Activated CD8-positive, alpha-beta memory T cell treated with anti-CD3 and anti-CD28 coated beads, Interleukin-2, amount 10 ng/mL, durations not matched to agents 7 days and 5 days (primary cell): ENCODE measurements at regions of chr11 and their contacts with region 1.

Region 1: GRCh38 chr11:12137007-12137690 is 26.8 kb downstream of the MICAL2 start:
- DNase-seq: no peak
- ATAC-seq: no peak
- H3K4me3 Mint-ChIP-seq: no peak overlapping the region
- H3K27ac Mint-ChIP-seq: no peak overlapping the region
- H3K4me1 Mint-ChIP-seq: peaks cover 37% of the 10 kb centered on the region
- H3K27me3 Mint-ChIP-seq: no peaks in the 10 kb centered on the region

Region 2: GRCh38 chr11:12122083-12122482 is 15.1 kb before region 1 on chr11:
- CTCF ChIA-PET with region 1: interaction called, 10 read pairs
- DNase-seq: no peak
- ATAC-seq: no peak
- H3K4me3 Mint-ChIP-seq: no peak overlapping the region
- H3K27ac Mint-ChIP-seq: no peak overlapping the region
- H3K4me1 Mint-ChIP-seq: peaks cover 53% of the 10 kb centered on the region
- H3K27me3 Mint-ChIP-seq: no peaks in the 10 kb centered on the region

Region 3: DNA sequence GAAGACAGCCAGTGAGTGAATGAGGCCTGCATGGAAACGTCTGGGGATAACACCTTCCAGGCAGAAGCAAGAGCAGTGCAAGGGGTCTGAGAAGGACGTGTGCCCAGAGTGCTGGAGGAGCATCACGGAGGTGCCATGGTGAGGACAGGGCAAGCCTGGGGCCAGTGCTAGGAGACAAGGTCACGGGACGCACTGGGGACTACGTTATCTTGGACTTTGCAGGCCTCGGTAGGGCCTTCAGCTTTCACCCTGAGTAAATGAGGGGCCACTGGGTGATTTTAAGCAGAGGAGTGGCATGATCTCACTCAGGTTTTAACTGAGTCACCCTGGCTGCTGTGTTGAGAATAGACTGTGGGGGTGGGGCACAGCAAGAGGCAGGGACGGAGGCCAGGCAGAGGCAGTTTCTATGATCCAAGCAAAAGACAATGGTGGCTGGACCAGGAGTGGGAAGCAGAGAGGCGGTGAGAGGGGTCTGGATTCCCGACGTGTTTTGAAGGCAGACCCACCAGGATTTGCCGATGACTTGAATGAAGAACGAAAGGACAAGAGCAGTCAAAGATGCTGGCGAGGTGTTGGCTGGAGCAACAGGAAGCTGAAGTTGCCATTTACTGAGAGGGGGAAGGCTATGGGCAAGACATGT is 137.5 kb after region 1 on chr11:
- CTCF ChIA-PET with region 1: no interaction called
- DNase-seq: no peak
- ATAC-seq: no peak
- H3K4me3 Mint-ChIP-seq: no peak overlapping the region
- H3K27ac Mint-ChIP-seq: no peak overlapping the region
- H3K4me1 Mint-ChIP-seq: no peaks in the 10 kb centered on the region
- H3K27me3 Mint-ChIP-seq: no peaks in the 10 kb centered on the region